ENCODE measurements at regions of chr1 and their contacts with region 1.

Region 1: GRCh38 chr1:236589531-236589930 is 14.8 kb downstream of the HEATR1 start:
- DNase-seq: no peak
- H3K4me3 Mint-ChIP-seq: no peak overlapping the region
- H3K27ac Mint-ChIP-seq: no peak overlapping the region
- H3K4me1 Mint-ChIP-seq: peaks cover 8% of the 10 kb centered on the region
- H3K27me3 Mint-ChIP-seq: no peaks in the 10 kb centered on the region

Region 2: GRCh38 chr1:235998812-235999211 is 590.7 kb before region 1 on chr1:
- intact Hi-C with region 1: no loop called
- DNase-seq: peak; percentile 88
- H3K4me3 Mint-ChIP-seq: peak overlapping the region; percentile 75
- H3K27ac Mint-ChIP-seq: peak overlapping the region; percentile 97
- H3K4me1 Mint-ChIP-seq: peaks cover 56% of the 10 kb centered on the region
- H3K27me3 Mint-ChIP-seq: no peaks in the 10 kb centered on the region

Region 3: GRCh38 chr1:236239092-236239585 is 350.4 kb before region 1 on chr1:
- intact Hi-C with region 1: no loop called
- DNase-seq: no peak
- H3K4me3 Mint-ChIP-seq: no peak overlapping the region
- H3K27ac Mint-ChIP-seq: no peak overlapping the region
- H3K4me1 Mint-ChIP-seq: no peaks in the 10 kb centered on the region
- H3K27me3 Mint-ChIP-seq: no peaks in the 10 kb centered on the region

Region 4: DNA sequence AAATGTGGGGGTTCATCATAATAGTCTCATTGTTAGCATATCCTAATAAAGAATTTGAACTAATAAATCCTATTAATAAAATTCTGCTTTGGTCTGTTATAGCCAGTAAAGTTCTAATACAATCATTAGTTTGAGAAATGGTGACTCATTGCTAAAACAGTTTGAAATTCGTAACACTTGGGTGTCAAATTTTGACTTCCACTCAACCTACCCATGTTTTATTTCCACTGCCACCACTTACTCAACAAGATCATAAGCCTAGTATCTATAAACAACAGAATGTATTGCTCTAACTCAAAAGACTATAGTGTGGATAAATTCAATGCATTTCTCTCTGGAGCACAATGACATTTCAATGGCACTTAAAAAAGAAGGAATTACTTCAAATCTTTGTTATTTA is 36.6 kb before region 1 on chr1:
- intact Hi-C with region 1: loop called (anchors 5 kb)
- DNase-seq: no peak
- H3K4me3 Mint-ChIP-seq: no peak overlapping the region
- H3K27ac Mint-ChIP-seq: no peak overlapping the region
- H3K4me1 Mint-ChIP-seq: peaks cover 4% of the 10 kb centered on the region
- H3K27me3 Mint-ChIP-seq: no peaks in the 10 kb centered on the region

Region 5: GRCh38 chr1:236748471-236748870 is 158.9 kb after region 1 on chr1:
- intact Hi-C with region 1: no loop called
- DNase-seq: no peak
- H3K4me3 Mint-ChIP-seq: no peak overlapping the region
- H3K27ac Mint-ChIP-seq: no peak overlapping the region
- H3K4me1 Mint-ChIP-seq: no peaks in the 10 kb centered on the region
- H3K27me3 Mint-ChIP-seq: peaks cover 1% of the 10 kb centered on the region

Measured in activated CD4-positive, alpha-beta T cell treated with anti-CD3 and anti-CD28 coated beads, Interleukin-2, amount 10 ng/mL, durations not matched to agents 24 days and 14 days (primary cell).